H1 (cell line): ENCODE measurements at regions of chr5 and their contacts with region 1.

Region 1: GRCh38 chr5:138641547-138642298 is 66.5 kb upstream of the HSPA9 start:
- DNase-seq: peak; percentile 34 to 98
- H3K4me3 ChIP-seq: no peak overlapping the region
- H3K27ac ChIP-seq: no peak overlapping the region
- H3K4me1 ChIP-seq: peaks cover 0 to 16% (median 11%) of the 10 kb centered on the region in 4 experiments; a peak in 6 of 7 replicates
- H3K27me3 ChIP-seq: no peaks in the 10 kb centered on the region
- CTCF ChIP-seq: peak in 2 of 3 experiments; percentile 86 to 88; a peak in 3 of 4 replicates
- EP300 ChIP-seq: peak in 1 of 2 experiments; percentile 40; a peak in 1 of 3 replicates
- POLR2A ChIP-seq: no peak
- RAD21 ChIP-seq: peak; percentile 91 to 93

Region 2: GRCh38 chr5:138601444-138601843 is 40.3 kb before region 1 on chr5:
- CTCF ChIA-PET with region 1: interaction called, 11 read pairs
- POLR2A ChIA-PET with region 1: no interaction called
- DNase-seq: no peak
- H3K4me3 ChIP-seq: no peak overlapping the region
- H3K27ac ChIP-seq: no peak overlapping the region
- H3K4me1 ChIP-seq: no peaks in the 10 kb centered on the region; a peak in 1 of 7 replicates
- H3K27me3 ChIP-seq: no peaks in the 10 kb centered on the region
- CTCF ChIP-seq: no peak
- EP300 ChIP-seq: no peak
- POLR2A ChIP-seq: no peak
- RAD21 ChIP-seq: no peak

Region 3: GRCh38 chr5:138610918-138611677 is 30.6 kb before region 1 on chr5:
- CTCF ChIA-PET with region 1: interaction called, 12 read pairs
- POLR2A ChIA-PET with region 1: no interaction called
- DNase-seq: peak in 1 of 2 experiments; percentile 72
- H3K4me3 ChIP-seq: peak overlapping the region; percentile 33 to 69 (median 64)
- H3K27ac ChIP-seq: peak overlapping the region; percentile 56
- H3K4me1 ChIP-seq: peaks cover 3 to 21% (median 16%) of the 10 kb centered on the region in 4 experiments
- H3K27me3 ChIP-seq: no peaks in the 10 kb centered on the region
- CTCF ChIP-seq: peak; percentile 36 to 52 (median 41)
- EP300 ChIP-seq: peak in 1 of 2 experiments; percentile 27; a peak in 1 of 3 replicates
- POLR2A ChIP-seq: no peak
- RAD21 ChIP-seq: peak; percentile 35 to 53; a peak in 3 of 4 replicates

Region 4: GRCh38 chr5:138663009-138663408 is 21.3 kb after region 1 on chr5:
- CTCF ChIA-PET with region 1: interaction called, 192 read pairs
- POLR2A ChIA-PET with region 1: interaction called, 3 read pairs
- DNase-seq: no peak
- H3K4me3 ChIP-seq: no peak overlapping the region
- H3K27ac ChIP-seq: no peak overlapping the region
- H3K4me1 ChIP-seq: peaks cover 0 to 5% (median 2%) of the 10 kb centered on the region in 4 experiments; a peak in 3 of 7 replicates
- H3K27me3 ChIP-seq: no peaks in the 10 kb centered on the region; a peak in 1 of 7 replicates
- CTCF ChIP-seq: no peak
- EP300 ChIP-seq: no peak
- POLR2A ChIP-seq: no peak
- RAD21 ChIP-seq: no peak

Region 5: DNA sequence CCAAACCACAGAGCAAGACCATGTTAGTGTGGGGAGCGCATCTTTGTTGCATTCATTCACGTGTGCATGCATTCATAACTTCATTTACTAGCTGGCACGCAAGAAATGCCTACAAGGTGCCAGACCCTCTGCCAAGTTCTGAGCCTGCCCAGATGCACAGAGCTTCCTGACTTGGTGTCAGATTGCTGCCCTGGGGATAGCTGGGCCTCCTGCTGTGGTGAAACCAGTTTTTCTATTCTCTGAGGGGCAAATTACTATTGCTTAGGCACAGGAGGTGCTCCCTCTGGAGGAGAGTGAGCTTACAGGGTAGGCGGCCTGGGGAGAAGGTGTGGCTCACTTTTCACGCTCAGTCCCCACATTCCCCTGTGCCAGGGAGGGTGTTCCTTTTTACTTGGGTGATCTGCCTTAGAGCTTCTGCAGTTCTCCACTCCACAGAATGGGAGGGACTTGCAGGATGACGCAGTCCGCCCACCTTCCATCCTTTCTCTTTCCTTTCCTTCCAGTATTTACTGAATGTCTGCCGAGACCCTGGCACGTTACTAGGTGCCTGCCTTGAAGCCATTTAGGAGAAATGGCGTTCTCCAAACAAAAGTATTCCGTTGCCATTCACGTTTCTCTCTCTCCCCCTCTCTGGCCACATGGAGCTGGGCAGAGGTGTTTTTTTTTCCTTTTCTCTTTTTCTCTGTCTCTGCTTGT is 83.6 kb after region 1 on chr5:
- CTCF ChIA-PET with region 1: interaction called, 22 read pairs
- POLR2A ChIA-PET with region 1: interaction called, 4 read pairs
- DNase-seq: peak; percentile 73 to 81
- H3K4me3 ChIP-seq: no peak overlapping the region; a peak in 1 of 8 replicates
- H3K27ac ChIP-seq: peak overlapping the region; percentile 56
- H3K4me1 ChIP-seq: peaks cover 13 to 26% (median 20%) of the 10 kb centered on the region in 4 experiments
- H3K27me3 ChIP-seq: no peaks in the 10 kb centered on the region
- CTCF ChIP-seq: peak; percentile 56 to 78 (median 56)
- EP300 ChIP-seq: peak in 1 of 2 experiments; percentile 53; a peak in 1 of 3 replicates
- POLR2A ChIP-seq: peak in 1 of 2 experiments; percentile 51; a peak in 1 of 3 replicates
- RAD21 ChIP-seq: peak; percentile 51 to 70

Region 6: DNA sequence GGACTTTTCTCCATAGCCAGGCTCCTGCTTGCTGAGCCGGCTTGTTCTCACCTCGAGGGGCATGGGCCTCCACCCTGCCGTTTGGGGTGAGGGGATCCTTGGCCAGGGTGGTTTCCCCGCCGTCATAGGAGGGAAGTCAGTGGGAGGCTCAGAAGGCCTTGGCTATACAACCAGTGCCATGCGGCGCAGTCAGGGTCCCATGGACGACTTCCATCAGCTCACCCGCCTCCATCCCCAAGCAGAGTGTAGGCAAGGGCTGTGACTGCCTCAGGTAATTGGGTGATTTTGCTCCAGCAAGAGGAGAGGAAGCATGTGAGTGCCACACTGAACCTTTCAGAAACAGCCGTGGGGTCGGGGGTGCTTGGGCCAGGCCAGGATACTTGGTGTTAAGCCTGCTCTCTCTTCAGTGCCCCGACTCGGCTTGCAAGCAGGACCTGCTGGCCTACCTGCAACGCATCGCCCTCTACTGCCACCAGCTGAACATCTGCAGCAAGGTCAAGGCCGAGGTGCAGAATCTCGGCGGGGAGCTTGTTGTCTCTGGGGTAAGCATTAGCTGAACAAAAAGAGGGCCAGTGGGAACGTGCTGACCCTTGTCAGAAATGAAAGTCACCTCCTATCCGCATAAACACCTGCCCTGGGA is 290.6 kb after region 1 on chr5:
- CTCF ChIA-PET with region 1: interaction called, 19 read pairs
- POLR2A ChIA-PET with region 1: no interaction called
- DNase-seq: no peak
- H3K4me3 ChIP-seq: no peak overlapping the region
- H3K27ac ChIP-seq: no peak overlapping the region
- H3K4me1 ChIP-seq: peaks cover 0 to 14% (median 5%) of the 10 kb centered on the region in 4 experiments; a peak in 5 of 7 replicates
- H3K27me3 ChIP-seq: no peaks in the 10 kb centered on the region
- CTCF ChIP-seq: peak; percentile 77 to 93 (median 86)
- EP300 ChIP-seq: no peak
- POLR2A ChIP-seq: no peak
- RAD21 ChIP-seq: peak; percentile 76 to 86